ENCODE measurements at regions of chrX and their contacts with region 1.

Region 1: GRCh38 chrX:12946838-12947544 is 27.9 kb upstream of the TMSB4X start:
- DNase-seq: peak; percentile 81
- ATAC-seq: peak; percentile 23
- H3K4me3 Mint-ChIP-seq: peak overlapping the region; percentile 69
- H3K27ac Mint-ChIP-seq: peak overlapping the region; percentile 93
- H3K4me1 Mint-ChIP-seq: peaks cover 48% of the 10 kb centered on the region
- H3K27me3 Mint-ChIP-seq: no peaks in the 10 kb centered on the region

Region 2: GRCh38 chrX:12881914-12882313 is 65.1 kb before region 1 on chrX:
- CTCF ChIA-PET with region 1: no interaction called
- POLR2A ChIA-PET with region 1: no interaction called
- DNase-seq: no peak
- ATAC-seq: no peak
- H3K4me3 Mint-ChIP-seq: no peak overlapping the region
- H3K27ac Mint-ChIP-seq: no peak overlapping the region
- H3K4me1 Mint-ChIP-seq: no peaks in the 10 kb centered on the region
- H3K27me3 Mint-ChIP-seq: peaks cover 15% of the 10 kb centered on the region

Region 3: DNA sequence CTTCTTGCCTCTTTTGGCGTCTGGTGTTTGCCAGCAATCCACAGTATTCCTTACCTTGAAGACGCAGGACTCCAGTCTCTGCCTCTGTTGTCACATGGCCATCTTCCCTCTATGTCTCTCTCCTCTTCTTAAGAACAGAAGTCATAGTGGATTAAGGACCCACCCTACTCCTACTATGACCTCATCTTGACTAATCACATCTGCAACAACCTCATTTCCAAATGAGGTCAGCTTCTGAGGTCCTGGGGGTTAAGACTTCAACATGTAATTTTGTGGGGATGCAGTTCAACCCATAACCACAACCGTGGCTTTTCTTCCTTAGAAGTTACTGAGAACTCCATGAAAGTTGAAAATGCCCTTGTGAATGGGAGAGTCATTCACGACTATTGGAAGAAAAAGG is 17.3 kb before region 1 on chrX:
- CTCF ChIA-PET with region 1: interaction called, 11 read pairs
- POLR2A ChIA-PET with region 1: no interaction called
- DNase-seq: no peak
- ATAC-seq: no peak
- H3K4me3 Mint-ChIP-seq: no peak overlapping the region
- H3K27ac Mint-ChIP-seq: no peak overlapping the region
- H3K4me1 Mint-ChIP-seq: no peaks in the 10 kb centered on the region
- H3K27me3 Mint-ChIP-seq: no peaks in the 10 kb centered on the region

Region 4: GRCh38 chrX:12974796-12975669 is 28.0 kb after region 1 on chrX and contains the start of gene TMSB4X:
- CTCF ChIA-PET with region 1: interaction called, 406 read pairs
- POLR2A ChIA-PET with region 1: interaction called, 1,048 read pairs
- DNase-seq: peak; percentile 90
- ATAC-seq: peak; percentile 61
- H3K4me3 Mint-ChIP-seq: peak within 1 kb of the TSS; percentile 95
- H3K27ac Mint-ChIP-seq: peak within 1 kb of the TSS; percentile 99
- H3K4me1 Mint-ChIP-seq: peaks cover 30% of the 10 kb centered on the region
- H3K27me3 Mint-ChIP-seq: no peaks in the 10 kb centered on the region
- total RNA-seq, gene TMSB4X: 8,800 to 8,961 TPM

Region 5: GRCh38 chrX:13005661-13006473 is 58.9 kb after region 1 on chrX:
- CTCF ChIA-PET with region 1: interaction called, 31 read pairs
- POLR2A ChIA-PET with region 1: interaction called, 8 read pairs
- DNase-seq: no peak
- ATAC-seq: peak; percentile 34
- H3K4me3 Mint-ChIP-seq: peak overlapping the region; percentile 58
- H3K27ac Mint-ChIP-seq: peak overlapping the region; percentile 98
- H3K4me1 Mint-ChIP-seq: peaks cover 67% of the 10 kb centered on the region
- H3K27me3 Mint-ChIP-seq: no peaks in the 10 kb centered on the region

Region 6: DNA sequence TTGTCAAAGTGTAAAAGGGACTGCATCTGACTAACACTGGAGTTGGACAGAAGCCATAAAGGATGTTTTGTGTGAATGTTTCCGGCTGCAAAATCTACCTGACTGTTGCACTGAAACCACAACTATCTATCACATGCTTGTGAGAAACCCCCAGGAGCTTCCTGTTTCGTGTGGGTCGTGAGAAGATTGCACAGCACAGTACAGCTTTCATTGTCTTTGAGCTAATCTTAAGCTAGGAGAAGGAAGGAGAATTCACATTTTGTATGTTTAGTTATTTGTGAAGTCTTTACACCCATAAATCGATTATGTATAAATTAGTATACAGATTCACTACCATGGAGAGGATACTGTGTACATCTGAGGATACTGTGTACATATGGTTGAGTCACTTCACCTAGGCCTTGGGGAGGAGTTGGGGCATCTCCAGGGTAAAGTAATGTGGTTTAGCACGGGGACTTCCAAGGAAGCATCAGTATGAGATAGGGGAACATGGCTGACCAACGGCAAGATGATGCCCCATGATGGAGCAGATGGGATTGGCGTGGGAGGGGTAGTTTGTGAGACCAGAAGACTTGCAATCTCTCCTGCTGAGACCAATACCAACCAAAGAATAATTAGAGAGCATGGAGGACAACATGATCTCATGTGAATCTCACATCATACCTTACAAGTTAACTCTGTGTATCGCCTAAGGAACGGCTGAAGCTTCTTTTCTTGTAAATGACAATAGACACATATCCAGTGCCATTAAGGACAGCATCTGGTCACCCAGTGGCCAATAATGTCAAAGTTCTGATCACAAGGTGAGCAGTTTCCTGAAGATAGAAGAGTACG is 140.5 kb after region 1 on chrX:
- CTCF ChIA-PET with region 1: interaction called, 173 read pairs
- POLR2A ChIA-PET with region 1: interaction called, 55 read pairs
- DNase-seq: peak; percentile 81
- ATAC-seq: peak; percentile 60
- H3K4me3 Mint-ChIP-seq: peak overlapping the region; percentile 79
- H3K27ac Mint-ChIP-seq: peak overlapping the region; percentile 98
- H3K4me1 Mint-ChIP-seq: peaks cover 94% of the 10 kb centered on the region
- H3K27me3 Mint-ChIP-seq: no peaks in the 10 kb centered on the region

Region 7: DNA sequence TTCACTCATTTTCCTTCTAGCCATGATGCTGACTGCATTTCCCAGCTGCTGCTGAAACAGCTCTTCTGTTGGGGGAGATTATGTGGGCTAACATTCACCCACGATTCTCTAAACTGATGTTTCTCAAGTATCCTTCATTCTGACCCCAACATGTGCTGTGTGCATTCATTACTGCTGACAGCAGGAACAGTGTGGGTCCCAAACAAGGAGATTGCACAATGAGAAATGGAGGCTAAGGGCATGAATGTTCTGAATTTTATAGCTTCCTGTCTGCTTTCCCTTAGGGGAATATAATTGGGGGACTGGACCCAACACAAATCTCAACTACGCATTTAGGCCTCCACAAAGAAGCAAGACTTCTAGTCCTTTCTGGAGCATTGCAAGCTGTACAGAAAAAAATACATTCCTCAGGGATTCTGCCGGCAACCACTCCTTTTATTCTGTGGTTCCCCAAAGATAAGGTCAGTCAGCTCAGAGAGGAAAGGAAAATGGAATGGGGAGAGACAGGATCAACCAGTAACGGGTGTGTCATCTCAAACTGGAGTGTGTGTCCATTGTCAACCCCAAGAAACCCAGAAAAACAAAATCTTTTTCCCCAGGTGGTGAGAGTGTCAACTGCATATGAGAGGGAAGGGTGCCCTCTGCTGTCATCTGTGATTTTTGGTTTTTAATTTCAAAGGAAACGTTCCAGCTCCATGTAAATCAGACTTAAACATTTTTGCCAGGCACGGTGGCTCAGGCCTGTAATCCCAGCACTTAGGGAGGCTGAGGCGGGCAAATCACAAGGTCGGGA is 540.9 kb after region 1 on chrX:
- CTCF ChIA-PET with region 1: interaction called, 97 read pairs
- POLR2A ChIA-PET with region 1: interaction called, 5 read pairs
- DNase-seq: peak; percentile 62
- ATAC-seq: peak; percentile 84
- H3K4me3 Mint-ChIP-seq: no peak overlapping the region
- H3K27ac Mint-ChIP-seq: peak overlapping the region; percentile 76
- H3K4me1 Mint-ChIP-seq: peaks cover 41% of the 10 kb centered on the region
- H3K27me3 Mint-ChIP-seq: no peaks in the 10 kb centered on the region